Activated CD8-positive, alpha-beta memory T cell treated with anti-CD3 and anti-CD28 coated beads, Interleukin-2, amount 10 ng/mL, durations not matched to agents 7 days and 5 days (primary cell): ENCODE measurements at regions of chr3 and their contacts with region 1.

Region 1: DNA sequence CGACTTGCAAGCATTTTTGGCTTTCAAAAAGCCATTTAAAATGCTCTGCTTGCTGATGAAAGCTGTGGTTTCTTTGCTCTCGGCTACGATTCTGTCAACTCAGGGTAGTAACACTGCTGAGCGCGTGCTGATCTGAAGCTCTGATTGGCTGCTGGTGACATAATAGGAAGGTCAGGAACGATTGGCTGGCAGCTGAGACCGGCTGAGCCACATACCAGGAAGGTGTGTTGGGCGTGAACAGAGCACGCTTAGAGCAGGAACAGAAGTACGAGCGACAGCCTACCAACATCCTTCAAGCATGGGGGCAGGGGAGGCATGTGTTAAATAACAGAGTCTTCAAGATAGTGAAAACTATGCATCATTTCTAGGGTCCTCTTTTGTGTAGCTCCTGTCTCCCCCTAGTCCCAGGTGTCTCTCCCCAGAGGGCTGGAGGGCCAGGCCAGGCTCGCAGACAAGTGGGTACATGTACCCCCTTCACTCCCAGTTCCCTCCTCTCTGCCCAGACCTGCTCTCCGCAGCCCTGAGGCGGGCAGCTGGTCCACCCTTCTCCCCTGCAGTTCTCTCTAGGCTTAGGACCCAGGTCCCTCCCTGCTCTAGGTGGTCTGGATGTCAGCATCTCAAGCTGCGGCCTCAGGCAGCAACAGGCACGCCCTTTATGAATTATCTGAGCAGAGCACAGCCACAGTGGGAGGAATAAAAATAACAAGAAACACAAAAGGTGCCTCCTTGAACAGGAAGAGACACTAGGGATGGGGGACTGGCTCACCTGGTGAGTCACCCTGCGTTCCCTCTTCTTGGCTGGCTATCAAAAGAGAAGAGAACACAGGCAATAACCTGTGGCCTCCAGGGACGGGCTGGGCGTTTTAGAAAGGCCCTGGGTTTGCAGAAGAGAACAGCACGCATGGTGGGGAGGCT is 76.0 kb downstream of the TAMM41 start:
- DNase-seq: peak; percentile 95
- ATAC-seq: peak; percentile 100
- H3K4me3 Mint-ChIP-seq: peak overlapping the region; percentile 19
- H3K27ac Mint-ChIP-seq: peak overlapping the region; percentile 88
- H3K4me1 Mint-ChIP-seq: peaks cover 29% of the 10 kb centered on the region
- H3K27me3 Mint-ChIP-seq: no peaks in the 10 kb centered on the region

Region 2: DNA sequence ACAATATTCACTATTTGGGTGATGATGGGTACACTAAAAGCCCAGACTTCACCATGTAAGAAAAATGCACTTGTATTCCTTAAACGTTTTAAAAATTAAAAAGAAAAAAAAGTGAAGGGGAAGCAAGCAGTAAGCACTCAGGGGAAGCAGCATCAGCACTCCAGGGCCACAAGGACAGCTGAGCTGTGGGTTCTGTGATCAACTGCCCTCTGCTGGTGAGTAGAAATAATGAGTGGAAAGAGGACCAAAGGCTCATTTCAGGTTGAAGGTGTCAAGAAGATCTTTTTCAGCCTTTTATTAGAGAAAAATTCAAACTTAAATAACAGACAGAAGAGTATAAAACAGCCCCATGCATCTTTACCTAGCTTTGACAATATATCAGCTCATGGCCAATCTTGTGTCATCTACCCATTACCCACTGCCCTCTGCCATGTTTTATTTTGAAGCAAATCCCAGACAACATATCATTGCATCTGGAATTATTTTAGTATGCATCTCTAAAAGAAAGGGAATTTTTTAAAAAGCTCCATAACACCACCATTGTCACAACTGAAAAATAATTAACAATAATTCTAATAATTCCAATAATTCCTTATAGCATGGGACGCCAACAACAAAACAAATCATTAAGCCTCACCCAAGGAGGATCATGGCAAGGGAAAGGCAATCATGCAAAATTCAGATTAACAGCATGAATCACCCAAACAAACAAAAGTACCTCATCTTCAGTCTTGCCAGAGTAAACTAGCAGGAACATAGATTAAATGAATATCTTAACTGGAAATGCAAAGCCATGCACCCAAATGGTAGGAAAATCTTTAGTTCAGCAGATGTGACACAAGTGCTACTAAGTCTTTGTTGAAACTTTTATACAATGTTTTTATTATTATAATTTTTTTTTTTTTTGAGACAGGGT is 33.5 kb after region 1 on chr3:
- CTCF ChIA-PET with region 1: interaction called, 10 read pairs
- DNase-seq: peak; percentile 68
- ATAC-seq: peak; percentile 91
- H3K4me3 Mint-ChIP-seq: no peak overlapping the region
- H3K27ac Mint-ChIP-seq: no peak overlapping the region
- H3K4me1 Mint-ChIP-seq: peaks cover 15% of the 10 kb centered on the region
- H3K27me3 Mint-ChIP-seq: no peaks in the 10 kb centered on the region